ENCODE measurements at regions of chr3 and their contacts with region 1.

Region 1: GRCh38 chr3:186241910-186242821 is 119.9 kb downstream of the DGKG start:
- DNase-seq: peak; percentile 80
- ATAC-seq: peak; percentile 95
- H3K4me3 ChIP-seq: peak overlapping the region; percentile 44 to 68
- H3K27ac ChIP-seq: peak overlapping the region; percentile 62
- H3K4me1 ChIP-seq: peaks cover 2 to 19% of the 10 kb centered on the region in 2 experiments; a peak in 3 of 4 replicates
- H3K27me3 ChIP-seq: no peaks in the 10 kb centered on the region
- CTCF ChIP-seq: peak; percentile 76 to 92 (median 83)
- POLR2A ChIP-seq: no peak
- RAD21 ChIP-seq: peak; percentile 91

Region 2: GRCh38 chr3:185942907-185943759 is 299.0 kb before region 1 on chr3:
- CTCF ChIA-PET with region 1: interaction called, 12 read pairs
- POLR2A ChIA-PET with region 1: interaction called, 3 read pairs
- RAD21 ChIA-PET with region 1: interaction called in 1 of 2 experiments, 5 read pairs
- intact Hi-C with region 1: no loop called
- DNase-seq: peak; percentile 72
- ATAC-seq: peak; percentile 91
- H3K4me3 ChIP-seq: no peak overlapping the region
- H3K27ac ChIP-seq: no peak overlapping the region
- H3K4me1 ChIP-seq: peaks cover 0 to 22% of the 10 kb centered on the region in 2 experiments; a peak in 3 of 4 replicates
- H3K27me3 ChIP-seq: no peaks in the 10 kb centered on the region
- CTCF ChIP-seq: peak; percentile 72 to 99 (median 99); a peak in 5 of 6 replicates
- POLR2A ChIP-seq: no peak
- RAD21 ChIP-seq: peak; percentile 68

Region 3: DNA sequence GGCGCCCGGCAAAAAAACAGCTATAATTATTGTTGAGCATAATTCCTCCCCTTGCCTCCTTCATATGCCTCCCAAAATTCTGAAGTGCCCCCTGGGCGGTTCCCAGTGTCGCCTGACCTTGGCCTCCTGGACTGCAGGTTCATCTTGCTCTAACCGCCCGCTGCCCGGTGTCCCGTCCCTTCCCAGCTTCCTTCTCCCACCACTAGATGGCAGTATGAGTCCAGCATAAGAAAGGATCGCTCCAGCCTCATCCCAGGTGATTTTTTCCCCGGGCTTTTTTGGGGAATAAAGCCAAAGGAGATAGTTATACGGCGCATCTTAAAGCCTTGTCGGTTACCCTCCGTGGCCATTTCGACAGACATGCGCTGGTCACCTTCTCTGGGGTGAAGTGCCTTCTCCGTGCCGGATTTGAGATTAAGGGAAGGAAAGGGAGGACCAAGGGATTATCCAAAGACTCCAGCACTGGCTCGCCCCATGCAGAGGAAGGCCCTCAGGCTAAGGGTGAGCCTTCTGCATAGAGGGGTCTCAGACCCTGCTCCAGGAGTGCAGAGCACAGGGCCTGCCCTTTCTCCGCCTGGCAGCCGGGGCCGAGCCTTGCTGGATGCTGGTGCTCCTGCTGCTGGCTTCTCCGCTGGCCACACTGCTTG is 258.5 kb before region 1 on chr3:
- CTCF ChIA-PET with region 1: interaction called, 14 read pairs
- POLR2A ChIA-PET with region 1: no interaction called
- RAD21 ChIA-PET with region 1: interaction called, 4 read pairs
- intact Hi-C with region 1: loop called (anchors 1 kb)
- DNase-seq: peak; percentile 59
- ATAC-seq: peak; percentile 99
- H3K4me3 ChIP-seq: no peak overlapping the region
- H3K27ac ChIP-seq: no peak overlapping the region
- H3K4me1 ChIP-seq: peaks cover 0 to 5% of the 10 kb centered on the region in 2 experiments; a peak in 1 of 4 replicates
- H3K27me3 ChIP-seq: no peaks in the 10 kb centered on the region
- CTCF ChIP-seq: peak; percentile 88 to 96 (median 91)
- POLR2A ChIP-seq: no peak
- RAD21 ChIP-seq: peak; percentile 98

Region 4: DNA sequence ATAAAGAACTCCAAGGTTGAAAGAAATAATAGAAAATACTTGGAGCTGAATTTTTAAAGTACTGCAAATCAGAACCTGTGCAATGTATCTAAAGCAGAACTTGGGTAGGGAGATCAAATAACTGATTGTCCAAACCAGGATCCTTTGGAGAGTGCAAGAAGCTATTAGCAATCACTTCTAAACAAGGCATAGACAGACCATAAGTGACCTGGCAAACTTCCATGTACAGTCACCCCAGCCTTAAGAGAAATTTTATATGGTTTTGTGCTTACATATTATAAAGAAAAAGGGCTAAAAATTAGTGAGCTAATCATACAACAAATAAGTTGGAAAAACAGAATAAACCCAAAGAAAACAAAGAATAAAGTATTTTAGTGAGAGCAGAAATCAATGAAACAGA is 168.5 kb before region 1 on chr3:
- CTCF ChIA-PET with region 1: interaction called, 9 read pairs
- POLR2A ChIA-PET with region 1: no interaction called
- RAD21 ChIA-PET with region 1: no interaction called
- intact Hi-C with region 1: loop called (anchors 1 kb)
- DNase-seq: no peak
- ATAC-seq: no peak
- H3K4me3 ChIP-seq: no peak overlapping the region
- H3K27ac ChIP-seq: no peak overlapping the region
- H3K4me1 ChIP-seq: no peaks in the 10 kb centered on the region
- H3K27me3 ChIP-seq: no peaks in the 10 kb centered on the region
- CTCF ChIP-seq: no peak
- POLR2A ChIP-seq: no peak
- RAD21 ChIP-seq: no peak

Region 5: DNA sequence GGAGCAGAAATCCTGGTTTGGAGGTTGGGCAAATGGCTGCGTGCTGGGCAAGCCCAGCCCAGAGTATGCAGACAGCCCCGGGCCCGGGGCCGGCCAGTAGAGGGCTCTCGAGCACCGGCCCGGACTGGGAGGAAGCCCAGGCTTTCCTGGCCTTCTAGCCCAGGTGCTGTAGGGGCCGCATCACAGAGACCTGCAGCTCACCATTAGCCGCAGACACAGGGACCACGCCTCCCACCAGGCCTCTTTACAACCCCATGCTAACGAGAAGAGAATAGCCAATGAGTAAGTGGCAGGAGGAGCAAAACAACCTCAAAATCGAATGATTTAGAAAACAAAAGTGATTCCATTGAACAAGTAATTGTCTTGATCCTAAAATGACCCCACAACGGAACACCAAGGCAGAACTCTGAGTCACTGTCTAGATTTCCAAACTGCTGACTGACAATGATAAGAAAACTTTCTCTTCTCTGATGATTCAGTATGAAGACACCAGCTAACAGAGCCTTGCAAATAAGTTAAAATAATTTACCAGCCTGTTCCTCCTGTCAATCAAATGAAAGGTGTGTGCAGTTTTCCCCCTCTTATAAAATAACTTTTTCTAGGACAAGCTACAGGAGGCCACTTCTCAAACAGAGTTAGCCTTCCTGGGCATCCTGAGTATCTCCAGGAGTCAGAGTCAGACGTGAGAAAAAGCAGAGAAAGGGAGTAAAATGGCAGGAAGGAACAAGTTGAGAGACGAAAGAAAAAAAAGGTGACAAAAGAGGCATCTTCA is 17.6 kb after region 1 on chr3:
- CTCF ChIA-PET with region 1: interaction called, 10 read pairs
- POLR2A ChIA-PET with region 1: no interaction called
- RAD21 ChIA-PET with region 1: no interaction called
- intact Hi-C with region 1: no loop called
- DNase-seq: peak; percentile 75
- ATAC-seq: peak; percentile 100
- H3K4me3 ChIP-seq: no peak overlapping the region
- H3K27ac ChIP-seq: no peak overlapping the region
- H3K4me1 ChIP-seq: peaks cover 5 to 12% of the 10 kb centered on the region in 2 experiments; a peak in 3 of 4 replicates
- H3K27me3 ChIP-seq: no peaks in the 10 kb centered on the region
- CTCF ChIP-seq: peak; percentile 88 to 99 (median 96)
- POLR2A ChIP-seq: no peak
- RAD21 ChIP-seq: peak; percentile 90

Region 6: DNA sequence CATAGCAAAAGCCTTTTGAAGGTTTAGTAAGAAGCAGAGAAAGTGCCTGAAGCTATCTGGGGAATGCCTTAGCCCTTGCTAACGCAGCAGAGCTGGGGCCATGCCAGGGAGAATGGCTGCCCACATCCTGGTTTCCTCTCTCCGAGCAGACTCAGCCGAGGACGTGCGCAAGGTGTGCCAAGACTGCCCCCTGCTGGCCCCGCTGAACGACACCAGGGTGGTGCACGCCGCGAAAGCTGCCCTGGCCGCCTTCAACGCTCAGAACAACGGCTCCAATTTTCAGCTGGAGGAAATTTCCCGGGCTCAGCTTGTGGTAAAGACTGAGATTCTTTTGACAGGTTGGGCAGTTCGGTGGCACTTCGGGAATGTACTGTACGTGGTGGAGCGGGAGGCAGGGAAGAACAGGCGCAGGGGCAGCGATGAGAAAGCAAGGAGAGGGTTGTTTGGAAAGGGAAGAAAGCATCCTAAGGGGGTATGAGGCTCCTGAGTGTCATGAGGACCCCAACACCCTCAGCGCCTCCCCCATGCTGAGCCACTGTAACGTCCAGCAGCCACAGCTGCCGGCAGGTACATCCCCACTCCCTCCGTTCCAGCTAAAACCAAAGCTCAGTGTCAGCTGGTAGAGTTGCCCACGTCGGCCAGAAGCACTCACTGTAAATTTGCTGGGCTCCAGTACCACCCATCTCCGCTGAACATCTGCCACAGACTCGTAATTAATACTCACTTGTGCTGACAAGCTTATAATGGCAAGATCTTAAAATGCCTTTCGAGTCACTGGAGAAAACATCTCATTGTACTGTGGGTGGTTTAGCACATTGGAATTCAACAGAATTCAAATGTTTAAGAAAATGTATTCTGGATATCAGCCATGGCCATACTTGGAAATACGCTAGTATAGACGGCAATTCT is 375.1 kb after region 1 on chr3:
- CTCF ChIA-PET with region 1: no interaction called
- POLR2A ChIA-PET with region 1: no interaction called
- RAD21 ChIA-PET with region 1: no interaction called
- intact Hi-C with region 1: no loop called
- DNase-seq: peak; percentile 66
- ATAC-seq: peak; percentile 98
- H3K4me3 ChIP-seq: peak overlapping the region; percentile 41 to 55
- H3K27ac ChIP-seq: no peak overlapping the region
- H3K4me1 ChIP-seq: peaks cover 2 to 21% of the 10 kb centered on the region in 2 experiments; a peak in 2 of 4 replicates
- H3K27me3 ChIP-seq: no peaks in the 10 kb centered on the region
- CTCF ChIP-seq: peak; percentile 77 to 94 (median 91)
- POLR2A ChIP-seq: no peak
- RAD21 ChIP-seq: peak; percentile 94